Dendritic cell treated with granulocyte-macrophage colony-stimulating factor and Interleukin-4, amounts not matched to agents 40 ng/mL and 50 ng/mL, for 4 days (primary cell): ENCODE measurements at regions of chr2 and their contacts with region 1.

Region 1: DNA sequence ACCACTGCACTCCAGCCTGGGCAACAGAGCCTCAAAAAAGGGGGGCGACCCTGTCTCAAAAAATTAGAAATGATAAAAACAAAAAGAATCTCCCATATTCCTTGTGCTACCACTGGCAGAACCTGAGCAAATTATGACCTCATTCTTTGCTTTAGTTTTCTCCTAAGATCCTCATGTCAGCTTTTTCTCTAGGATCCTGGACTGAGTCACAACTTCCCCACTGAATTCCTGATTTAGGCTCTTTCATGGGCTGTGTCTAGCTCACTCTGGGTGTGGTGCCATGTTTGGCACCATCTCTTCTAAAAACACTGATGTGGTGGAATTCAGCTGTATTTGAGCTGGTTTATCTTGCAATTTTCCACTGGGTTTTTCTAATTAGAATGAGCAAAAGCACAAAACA is 37.1 kb downstream of the EXOC6B start:
- H3K4me3 Mint-ChIP-seq: no peak overlapping the region
- H3K27ac Mint-ChIP-seq: peak overlapping the region; percentile 69
- H3K4me1 Mint-ChIP-seq: peaks cover 16% of the 10 kb centered on the region
- H3K27me3 Mint-ChIP-seq: peaks cover 2% of the 10 kb centered on the region

Region 2: DNA sequence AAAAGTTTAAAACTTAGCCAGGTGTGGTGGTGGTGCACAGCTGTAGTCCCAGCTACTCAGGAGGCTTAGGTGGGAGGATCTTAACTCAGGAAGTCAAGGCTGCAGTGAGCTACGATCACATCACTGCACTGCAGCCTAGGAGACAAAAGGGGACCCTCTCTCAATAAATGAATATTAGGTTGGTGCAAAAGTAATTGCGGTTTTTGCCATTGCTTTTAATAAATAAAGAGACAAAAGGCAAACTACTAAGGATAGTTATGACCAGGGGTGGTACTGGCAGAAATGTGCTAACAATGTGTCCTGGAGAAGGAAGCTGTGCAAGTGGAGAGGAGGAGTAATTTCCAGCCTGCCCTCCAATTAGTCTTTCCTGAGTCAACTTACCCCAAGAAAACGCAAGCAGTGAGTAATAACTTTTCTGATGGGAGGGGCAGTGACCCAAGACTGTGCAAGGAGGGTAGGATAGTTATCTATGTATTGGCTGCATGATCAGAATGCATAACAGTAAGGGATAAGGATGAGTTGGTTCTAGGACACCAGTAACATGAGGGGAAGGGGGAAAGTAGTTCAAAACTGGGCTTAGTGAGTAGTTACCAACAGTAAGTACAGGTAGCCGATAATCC is 35.6 kb after region 1 on chr2:
- intact Hi-C with region 1: loop called (anchors 5 kb)
- H3K4me3 Mint-ChIP-seq: peak overlapping the region; percentile 5
- H3K27ac Mint-ChIP-seq: no peak overlapping the region
- H3K4me1 Mint-ChIP-seq: peaks cover 16% of the 10 kb centered on the region
- H3K27me3 Mint-ChIP-seq: peaks cover 15% of the 10 kb centered on the region